ENCODE measurements at regions of chrX and their contacts with region 1.

Region 1: DNA sequence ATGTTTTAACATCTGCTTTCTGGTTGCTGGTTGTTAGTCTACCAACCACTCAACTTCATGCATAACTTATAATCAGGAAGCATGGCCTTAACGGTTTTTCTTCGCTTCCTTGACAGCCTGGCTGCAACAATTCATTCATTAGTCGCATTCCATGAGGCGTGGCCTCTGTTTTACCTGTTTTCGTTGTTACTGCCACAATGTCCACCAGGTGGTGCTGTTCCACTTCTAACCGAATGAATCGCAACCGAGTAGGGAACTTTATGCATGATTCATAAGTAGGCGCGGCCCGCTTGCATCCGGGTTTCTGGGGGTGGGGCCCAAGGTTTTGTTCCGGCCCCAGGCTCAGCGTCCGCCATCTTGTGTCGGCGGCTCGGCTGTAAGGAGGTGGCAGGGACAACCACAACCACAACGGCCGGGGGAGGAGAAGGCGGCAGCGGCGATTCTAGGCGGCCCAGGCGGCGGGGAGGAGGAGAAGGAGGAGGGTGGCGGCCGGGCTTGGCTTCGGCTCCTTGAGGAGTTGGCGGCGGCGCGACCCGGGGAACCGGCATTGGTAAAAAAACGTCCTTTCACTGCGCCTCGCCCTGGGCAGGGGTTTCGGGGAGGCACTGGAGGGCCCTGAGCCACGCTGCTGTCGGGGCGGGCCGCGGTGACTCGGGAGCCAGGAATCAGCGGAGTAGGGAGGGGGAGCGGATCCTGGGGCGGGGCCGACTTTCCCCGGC is at the start of gene UBA1:
- DNase-seq: peak; percentile 96
- H3K4me3 Mint-ChIP-seq: peak within 1 kb of the TSS; percentile 94
- H3K27ac Mint-ChIP-seq: peak within 1 kb of the TSS; percentile 94
- H3K4me1 Mint-ChIP-seq: peaks cover 58% of the 10 kb centered on the region
- H3K27me3 Mint-ChIP-seq: no peaks in the 10 kb centered on the region
- total RNA-seq, gene UBA1: 246 to 251 TPM

Region 2: GRCh38 chrX:46676399-46677356 is 517.0 kb before region 1 on chrX:
- CTCF ChIA-PET with region 1: no interaction called
- intact Hi-C with region 1: no loop called
- DNase-seq: no peak
- H3K4me3 Mint-ChIP-seq: no peak overlapping the region
- H3K27ac Mint-ChIP-seq: no peak overlapping the region
- H3K4me1 Mint-ChIP-seq: peaks cover 2% of the 10 kb centered on the region
- H3K27me3 Mint-ChIP-seq: no peaks in the 10 kb centered on the region

Region 3: DNA sequence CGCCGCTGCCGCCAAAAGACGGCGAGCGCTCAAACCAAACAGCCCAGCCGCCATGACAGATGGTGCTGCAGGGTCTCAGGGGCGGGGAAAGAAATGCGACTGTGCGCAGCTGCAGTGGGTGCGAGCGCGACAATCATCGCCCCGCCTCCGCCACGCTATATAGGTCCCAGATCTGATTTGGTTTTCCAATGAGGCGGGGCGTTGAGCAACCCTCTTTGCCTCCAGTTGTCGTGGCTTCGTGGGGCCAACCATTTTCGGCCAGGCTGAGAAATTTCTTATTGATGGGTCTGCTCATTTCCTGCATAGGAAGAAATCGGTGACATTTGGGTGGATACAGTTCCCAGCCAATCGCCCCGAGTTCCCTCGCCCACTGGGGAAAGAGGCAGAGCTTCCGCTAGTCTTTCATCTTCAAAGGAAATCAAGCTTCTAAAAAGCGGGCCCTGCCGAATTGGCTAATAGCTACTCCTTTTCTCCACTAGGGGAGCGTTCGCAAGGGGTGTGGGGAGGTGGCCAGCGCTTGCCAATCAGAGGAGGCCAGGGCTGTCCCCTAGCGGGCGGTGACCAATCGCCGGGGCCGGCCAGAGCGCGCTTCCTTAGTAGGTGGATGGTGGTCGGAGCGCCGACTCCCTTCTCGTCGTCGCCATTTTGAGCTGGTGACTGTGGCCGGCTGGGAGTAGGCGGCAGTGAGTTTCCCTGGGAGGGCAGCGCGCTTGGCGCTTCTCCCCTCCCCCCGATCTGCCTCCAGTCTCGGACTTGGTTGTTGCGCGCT is 48.8 kb before region 1 on chrX and contains the starts of genes NDUFB11 and RBM10:
- CTCF ChIA-PET with region 1: interaction called, 3 read pairs
- intact Hi-C with region 1: loop called (anchors 1 kb)
- DNase-seq: peak; percentile 94
- H3K4me3 Mint-ChIP-seq: peak within 1 kb of the TSS; percentile 97
- H3K27ac Mint-ChIP-seq: peak within 1 kb of the TSS; percentile 99
- H3K4me1 Mint-ChIP-seq: peaks cover 35% of the 10 kb centered on the region
- H3K27me3 Mint-ChIP-seq: no peaks in the 10 kb centered on the region
- total RNA-seq, gene NDUFB11: 85.8 to 87.2 TPM
- total RNA-seq, gene RBM10: 65.4 to 65.5 TPM

Region 4: GRCh38 chrX:47179221-47179920 is 14.3 kb before region 1 on chrX:
- CTCF ChIA-PET with region 1: no interaction called
- intact Hi-C with region 1: no loop called
- DNase-seq: no peak
- H3K4me3 Mint-ChIP-seq: no peak overlapping the region
- H3K27ac Mint-ChIP-seq: no peak overlapping the region
- H3K4me1 Mint-ChIP-seq: no peaks in the 10 kb centered on the region
- H3K27me3 Mint-ChIP-seq: no peaks in the 10 kb centered on the region

Region 5: GRCh38 chrX:47233337-47234113 is 39.9 kb after region 1 on chrX:
- CTCF ChIA-PET with region 1: interaction called, 3 read pairs
- intact Hi-C with region 1: loop called (anchors 1 kb)
- DNase-seq: peak; percentile 96
- H3K4me3 Mint-ChIP-seq: peak overlapping the region; percentile 85
- H3K27ac Mint-ChIP-seq: peak overlapping the region; percentile 92
- H3K4me1 Mint-ChIP-seq: peaks cover 20% of the 10 kb centered on the region
- H3K27me3 Mint-ChIP-seq: no peaks in the 10 kb centered on the region

Region 6: DNA sequence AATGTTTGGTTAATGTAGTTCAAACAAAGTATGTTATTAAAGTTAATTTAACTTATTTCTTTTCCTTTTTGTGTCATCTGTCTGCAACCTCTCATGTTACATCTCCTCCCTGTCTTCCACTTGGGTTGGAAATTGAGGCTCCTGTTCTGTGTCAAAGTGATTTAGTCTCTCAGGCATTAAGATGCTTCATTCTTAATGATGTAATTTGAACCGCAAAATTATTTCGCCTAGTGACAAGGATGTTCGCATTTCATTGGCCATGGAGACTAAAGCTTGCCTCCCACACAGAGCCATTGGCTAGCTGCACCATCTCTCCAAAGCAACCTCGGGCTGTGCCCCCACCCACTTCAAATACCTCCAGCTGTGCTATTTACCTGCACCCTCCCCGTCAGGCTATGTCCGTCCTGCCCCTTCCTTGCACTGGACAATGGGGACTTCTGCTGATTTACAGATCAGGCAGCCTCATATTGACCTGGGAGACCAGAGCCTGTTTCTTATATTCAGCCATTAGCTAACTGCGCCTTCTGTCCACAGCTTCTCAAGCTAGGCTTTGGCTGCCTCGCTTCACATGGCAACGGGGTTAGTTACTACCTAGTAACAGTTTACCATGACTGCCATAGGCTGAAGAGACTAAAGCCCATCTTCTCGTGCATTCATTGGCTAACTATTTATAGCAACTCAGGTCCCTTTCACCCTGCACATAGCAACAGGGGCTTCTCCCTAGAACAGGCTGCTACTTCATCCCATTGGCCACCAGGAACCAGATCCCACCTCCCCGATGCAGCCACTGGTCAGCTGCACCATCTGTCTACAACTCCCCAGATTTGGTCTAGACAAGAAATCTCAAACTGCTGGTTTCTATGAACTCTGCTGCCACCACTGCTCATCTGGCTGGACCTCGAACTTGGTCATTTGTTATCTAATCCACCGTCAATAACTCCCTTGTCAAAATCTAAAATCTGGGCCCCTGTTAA is 168.2 kb after region 1 on chrX:
- CTCF ChIA-PET with region 1: no interaction called
- intact Hi-C with region 1: loop called (anchors 5 kb)
- DNase-seq: peak; percentile 18
- H3K4me3 Mint-ChIP-seq: no peak overlapping the region
- H3K27ac Mint-ChIP-seq: no peak overlapping the region
- H3K4me1 Mint-ChIP-seq: peaks cover 20% of the 10 kb centered on the region
- H3K27me3 Mint-ChIP-seq: no peaks in the 10 kb centered on the region

Region 7: DNA sequence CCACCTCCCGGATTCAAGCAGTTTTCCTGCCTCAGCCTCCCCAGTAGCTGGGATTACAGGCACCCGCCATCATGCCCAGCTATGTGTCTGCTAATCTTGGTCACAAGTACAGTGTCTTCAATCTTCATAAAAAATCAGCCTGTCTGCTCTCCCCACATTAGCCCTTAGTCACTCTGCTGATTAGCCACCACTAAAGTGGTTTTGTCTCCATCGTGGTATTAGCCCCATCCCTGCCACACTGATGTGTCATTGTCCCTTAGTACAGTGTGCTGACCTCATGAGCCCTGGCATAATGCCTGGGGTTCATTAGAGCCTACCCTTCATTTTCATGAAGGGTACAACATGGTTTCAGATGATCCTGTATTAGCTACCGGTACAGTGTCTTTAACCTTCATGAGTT is 226.6 kb after region 1 on chrX:
- CTCF ChIA-PET with region 1: no interaction called
- intact Hi-C with region 1: no loop called
- DNase-seq: no peak
- H3K4me3 Mint-ChIP-seq: no peak overlapping the region
- H3K27ac Mint-ChIP-seq: no peak overlapping the region
- H3K4me1 Mint-ChIP-seq: no peaks in the 10 kb centered on the region
- H3K27me3 Mint-ChIP-seq: no peaks in the 10 kb centered on the region

Region 8: GRCh38 chrX:47482512-47483309 is 289.1 kb after region 1 on chrX and contains the start of gene ZNF41:
- CTCF ChIA-PET with region 1: interaction called, 4 read pairs
- intact Hi-C with region 1: loop called (anchors 2 kb)
- DNase-seq: peak; percentile 75
- H3K4me3 Mint-ChIP-seq: peak within 1 kb of the TSS; percentile 94
- H3K27ac Mint-ChIP-seq: peak within 1 kb of the TSS; percentile 96
- H3K4me1 Mint-ChIP-seq: peaks cover 32% of the 10 kb centered on the region
- H3K27me3 Mint-ChIP-seq: no peaks in the 10 kb centered on the region
- total RNA-seq, gene ZNF41: 4.6 to 6.4 TPM

Region 9: DNA sequence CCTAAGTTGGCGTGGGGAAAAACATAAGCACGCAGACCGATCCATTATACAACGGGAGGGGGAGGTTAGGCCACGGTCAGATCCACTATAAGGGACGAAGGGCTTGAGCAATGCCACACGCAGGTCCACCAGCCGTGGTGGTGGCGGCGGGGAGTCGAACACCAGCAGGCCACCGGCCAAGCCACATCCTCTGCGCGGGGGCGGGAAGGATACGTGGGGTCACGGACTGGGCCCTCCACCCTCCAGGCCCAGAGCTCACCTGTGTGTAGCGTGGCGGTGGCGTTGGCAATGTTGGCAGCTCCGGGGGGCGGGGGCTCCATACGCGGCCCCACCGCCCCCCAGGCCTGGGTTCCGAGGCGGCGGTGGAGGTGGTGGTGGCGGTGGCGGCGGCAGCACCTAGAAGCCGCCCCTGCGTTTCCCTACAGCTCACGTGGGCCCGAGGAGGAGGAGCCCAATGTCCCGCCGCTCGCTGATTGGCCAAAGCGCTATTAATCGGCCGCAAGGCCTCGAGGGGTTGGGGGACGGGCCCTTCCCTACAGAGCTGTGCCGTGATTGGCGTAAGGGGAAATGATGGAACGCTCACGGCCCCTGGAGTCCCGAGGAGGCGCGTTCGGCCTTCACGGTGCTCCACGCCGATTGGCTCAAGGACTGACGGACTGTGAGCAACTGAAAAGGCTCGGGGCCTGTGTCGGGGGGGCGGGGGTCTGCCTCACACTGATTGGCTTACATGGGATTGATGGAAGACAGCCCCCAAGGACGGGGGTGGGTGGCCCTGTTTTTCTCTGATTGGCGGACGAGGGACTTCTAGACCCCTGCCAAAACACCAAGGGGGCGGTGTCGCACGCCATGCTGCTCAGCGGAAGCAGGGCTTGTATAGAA is 456.8 kb after region 1 on chrX and contains the start of gene ELK1:
- CTCF ChIA-PET with region 1: no interaction called
- intact Hi-C with region 1: loop called (anchors 2 kb)
- DNase-seq: peak; percentile 93
- H3K4me3 Mint-ChIP-seq: peak within 1 kb of the TSS; percentile 88
- H3K27ac Mint-ChIP-seq: peak within 1 kb of the TSS; percentile 91
- H3K4me1 Mint-ChIP-seq: peaks cover 37% of the 10 kb centered on the region
- H3K27me3 Mint-ChIP-seq: no peaks in the 10 kb centered on the region
- total RNA-seq, gene ELK1: 58.1 to 58.8 TPM

Region 10: DNA sequence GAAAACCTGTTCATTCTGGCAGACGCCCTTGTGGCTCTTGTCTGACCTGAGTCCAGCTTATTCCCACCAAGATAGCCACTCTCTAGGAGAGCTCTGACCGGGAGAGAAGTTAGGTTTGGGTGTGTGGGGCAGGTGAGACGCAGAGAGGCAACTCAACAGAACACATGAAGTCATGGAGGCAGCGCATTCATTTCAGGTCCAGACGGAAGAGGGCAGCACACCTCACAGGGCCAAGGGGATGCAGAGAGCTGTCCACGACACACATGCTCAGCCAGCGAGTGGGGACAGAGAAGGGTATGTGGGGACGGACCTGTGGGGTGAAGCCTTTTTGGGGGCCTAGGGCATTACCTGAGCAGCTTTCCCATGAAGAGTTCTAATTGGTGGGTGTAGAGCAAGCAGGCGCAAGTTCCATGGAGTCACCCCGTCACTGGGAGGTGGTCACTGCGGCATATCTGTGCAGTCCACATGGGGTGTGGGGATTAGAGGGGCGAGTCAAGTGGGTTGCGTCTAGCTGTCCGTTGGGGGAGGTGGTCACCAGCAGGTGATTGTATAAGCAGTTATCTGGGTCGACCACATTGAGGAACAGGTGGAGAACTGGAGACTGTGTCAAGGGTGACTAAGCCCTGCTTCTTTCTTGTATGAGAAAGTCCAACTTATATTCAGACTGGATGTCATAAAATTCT is 489.7 kb after region 1 on chrX:
- CTCF ChIA-PET with region 1: no interaction called
- intact Hi-C with region 1: no loop called
- DNase-seq: no peak
- H3K4me3 Mint-ChIP-seq: no peak overlapping the region
- H3K27ac Mint-ChIP-seq: no peak overlapping the region
- H3K4me1 Mint-ChIP-seq: no peaks in the 10 kb centered on the region
- H3K27me3 Mint-ChIP-seq: no peaks in the 10 kb centered on the region